ENCODE measurements at regions of chr11 and their contacts with region 1.

Region 1: DNA sequence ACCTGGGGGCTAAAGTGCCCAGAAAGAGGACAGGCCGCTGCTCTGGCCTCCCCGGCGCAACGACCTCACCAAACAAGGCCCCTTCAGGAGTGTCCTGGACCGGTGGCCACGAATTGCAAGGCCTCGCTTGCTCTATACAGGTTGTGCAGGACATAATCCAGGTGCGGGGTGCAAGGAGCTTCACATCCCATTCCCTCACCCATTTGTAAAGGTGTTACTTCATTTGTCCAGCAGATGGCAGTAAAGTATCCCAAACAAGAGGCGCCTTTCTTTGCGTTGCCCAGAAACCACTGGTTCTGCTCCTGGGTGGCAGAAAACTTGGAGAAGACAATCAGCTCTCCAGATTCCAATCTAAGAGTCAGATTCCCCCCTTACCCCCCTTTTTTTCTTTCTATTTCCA is 35.9 kb upstream of the PRDM11 start:
- DNase-seq: peak; percentile 64
- H3K4me3 ChIP-seq: no peak overlapping the region
- H3K27ac ChIP-seq: no peak overlapping the region
- H3K4me1 ChIP-seq: no peaks in the 10 kb centered on the region
- H3K27me3 ChIP-seq: peaks cover 6 to 7% of the 10 kb centered on the region in 2 experiments
- CTCF ChIP-seq: peak; percentile 52 to 68
- POLR2A ChIP-seq: no peak

Region 2: DNA sequence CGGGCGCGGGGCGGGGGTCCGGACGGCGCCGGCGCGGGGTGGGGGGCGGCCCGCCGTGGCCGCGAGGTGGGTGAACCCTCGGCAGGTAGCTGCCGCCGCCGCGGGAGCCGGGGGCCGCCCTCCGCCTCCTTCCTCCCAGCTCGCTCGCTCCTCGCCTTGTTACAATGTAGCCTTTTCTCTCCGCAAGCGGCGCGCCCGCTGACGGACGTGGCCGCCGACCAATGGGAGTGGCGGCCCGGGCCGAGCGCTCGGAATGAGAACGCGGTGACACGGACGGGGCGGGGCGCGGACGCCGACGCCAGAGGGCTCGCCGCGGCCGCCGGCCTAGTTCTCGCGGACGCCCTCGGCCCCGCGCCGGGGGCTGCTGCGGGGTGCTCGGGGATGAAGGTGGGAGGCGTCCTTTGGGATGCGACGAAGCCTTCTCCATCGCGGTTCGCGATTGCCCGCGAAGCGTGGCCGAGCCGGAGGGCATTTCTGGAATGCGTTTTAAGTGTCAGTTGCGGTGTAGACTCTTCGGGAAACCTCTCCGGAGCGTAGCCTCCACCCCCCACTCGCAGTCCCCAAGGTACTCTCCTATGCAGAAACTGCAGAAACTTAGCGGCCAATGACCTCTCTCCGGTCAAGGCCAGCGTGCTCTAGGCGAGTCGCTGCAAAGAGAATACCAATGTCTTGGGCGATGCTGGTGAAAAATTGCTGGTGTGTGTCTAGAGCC is 36.6 kb after region 1 on chr11:
- CTCF ChIA-PET with region 1: interaction called, 14 read pairs
- POLR2A ChIA-PET with region 1: no interaction called
- dilution Hi-C with region 1: no loop called
- intact Hi-C with region 1: no loop called
- DNase-seq: peak; percentile 94
- H3K4me3 ChIP-seq: peak overlapping the region; percentile 41 to 86 (median 59)
- H3K27ac ChIP-seq: peak overlapping the region; percentile 47
- H3K4me1 ChIP-seq: peaks cover 17% of the 10 kb centered on the region
- H3K27me3 ChIP-seq: peaks cover 10 to 31% of the 10 kb centered on the region in 2 experiments
- CTCF ChIP-seq: no peak
- POLR2A ChIP-seq: no peak

Region 3: GRCh38 chr11:45233121-45233803 is 122.7 kb after region 1 on chr11:
- CTCF ChIA-PET with region 1: interaction called, 31 read pairs
- POLR2A ChIA-PET with region 1: no interaction called
- dilution Hi-C with region 1: no loop called
- intact Hi-C with region 1: loop called (anchors 2 kb)
- DNase-seq: peak; percentile 52
- H3K4me3 ChIP-seq: no peak overlapping the region
- H3K27ac ChIP-seq: no peak overlapping the region
- H3K4me1 ChIP-seq: no peaks in the 10 kb centered on the region
- H3K27me3 ChIP-seq: peaks cover 4 to 12% of the 10 kb centered on the region in 2 experiments
- CTCF ChIP-seq: peak; percentile 73 to 91
- POLR2A ChIP-seq: no peak

Region 4: DNA sequence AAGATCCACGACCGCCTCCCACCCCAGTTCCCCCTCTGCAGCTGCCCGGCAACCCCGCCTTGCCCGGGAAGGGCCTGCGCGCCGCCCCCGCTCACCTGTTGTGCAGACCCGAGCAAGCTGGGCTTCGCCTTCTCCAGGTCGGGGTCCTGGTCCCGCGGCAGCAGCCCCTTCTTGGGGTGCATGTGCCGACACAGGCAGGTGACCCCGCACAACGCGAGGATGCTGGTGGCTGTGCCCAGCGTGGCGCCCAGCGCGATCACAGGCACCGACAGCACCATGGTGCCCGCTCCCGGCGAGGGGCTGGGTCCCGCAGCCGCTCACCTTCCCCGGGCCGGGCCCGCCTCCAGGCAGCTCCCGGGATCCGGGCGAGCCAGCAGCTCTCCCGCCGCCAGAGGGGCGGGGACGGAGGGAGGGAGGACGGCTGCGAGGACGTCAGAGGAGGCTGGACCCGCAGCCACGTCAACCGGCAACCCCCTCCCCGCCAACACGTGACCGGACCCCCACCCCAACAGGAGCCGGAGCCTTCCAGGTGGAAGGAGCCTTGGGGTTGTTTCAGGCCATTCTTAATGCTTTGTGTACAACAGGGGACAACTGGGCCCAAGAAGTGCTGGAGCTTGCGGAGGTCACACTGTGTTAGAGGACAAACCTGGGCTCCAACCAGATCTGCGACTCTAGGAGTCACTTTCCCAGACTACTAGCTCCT is 175.5 kb after region 1 on chr11 and contains the start of gene SYT13:
- CTCF ChIA-PET with region 1: interaction called, 242 read pairs
- POLR2A ChIA-PET with region 1: no interaction called
- dilution Hi-C with region 1: no loop called
- intact Hi-C with region 1: no loop called
- DNase-seq: no peak
- H3K4me3 ChIP-seq: no peak within 1 kb of the TSS
- H3K27ac ChIP-seq: no peak within 1 kb of the TSS
- H3K4me1 ChIP-seq: no peaks in the 10 kb centered on the region
- H3K27me3 ChIP-seq: peaks cover 45 to 63% of the 10 kb centered on the region in 2 experiments
- CTCF ChIP-seq: no peak
- POLR2A ChIP-seq: no peak
- total RNA-seq, gene SYT13: not detected in 2 replicates

Region 5: GRCh38 chr11:45332276-45332934 is 221.8 kb after region 1 on chr11:
- CTCF ChIA-PET with region 1: interaction called, 62 read pairs
- POLR2A ChIA-PET with region 1: no interaction called
- dilution Hi-C with region 1: loop called (anchors 5 kb)
- intact Hi-C with region 1: loop called (anchors 1 kb)
- DNase-seq: peak; percentile 51
- H3K4me3 ChIP-seq: no peak overlapping the region
- H3K27ac ChIP-seq: no peak overlapping the region
- H3K4me1 ChIP-seq: peaks cover 10% of the 10 kb centered on the region
- H3K27me3 ChIP-seq: peaks cover 1% of the 10 kb centered on the region in 2 experiments
- CTCF ChIP-seq: peak; percentile 25 to 64
- POLR2A ChIP-seq: no peak

Measured in endothelial cell of umbilical vein (primary cell).